Heart right ventricle (tissue), 16 donors: ENCODE measurements at regions of chr19 and their contacts with region 1.

Region 1: GRCh38 chr19:3403489-3404323 is 37.3 kb downstream of the NFIC start:
- DNase-seq: peak; percentile 90 to 95
- ATAC-seq: peak; percentile 68 to 87 (median 80)
- H3K4me3 ChIP-seq: peak overlapping the region; percentile 11 to 58 (median 46)
- H3K27ac ChIP-seq: peak overlapping the region; percentile 97 to 100 (median 100)
- H3K4me1 ChIP-seq: peaks cover 21 to 92% (median 57%) of the 10 kb centered on the region in 9 donors
- H3K27me3 ChIP-seq: no peaks in the 10 kb centered on the region
- CTCF ChIP-seq: no peak

Region 2: GRCh38 chr19:3336680-3337523 is 66.8 kb before region 1 on chr19:
- intact Hi-C with region 1: loop called in 2 of 10 experiments (anchors 2 to 5 kb)
- DNase-seq: peak; percentile 83 to 87
- ATAC-seq: peak; percentile 87 to 97 (median 94)
- H3K4me3 ChIP-seq: no peak overlapping the region
- H3K27ac ChIP-seq: peak overlapping the region; percentile 83 to 97 (median 92)
- H3K4me1 ChIP-seq: peaks cover 20 to 40% (median 34%) of the 10 kb centered on the region in 9 donors
- H3K27me3 ChIP-seq: no peaks in the 10 kb centered on the region
- CTCF ChIP-seq: no peak

Region 3: GRCh38 chr19:3360421-3361383 is 43.0 kb before region 1 on chr19:
- intact Hi-C with region 1: loop called in 7 of 10 experiments (anchors 2 to 5 kb)
- DNase-seq: peak; percentile 81 to 84
- ATAC-seq: peak; percentile 56 to 82 (median 72)
- H3K4me3 ChIP-seq: peak overlapping the region; percentile 40 to 100 (median 82)
- H3K27ac ChIP-seq: peak overlapping the region; percentile 88 to 100 (median 96)
- H3K4me1 ChIP-seq: peaks cover 17 to 60% (median 43%) of the 10 kb centered on the region in 9 donors
- H3K27me3 ChIP-seq: peaks cover 0 to 10% (median 0%) of the 10 kb centered on the region in 7 donors
- CTCF ChIP-seq: peak in 5 of 9 donors; percentile 22 to 55 (median 48)

Region 4: GRCh38 chr19:3365836-3366752 is 37.6 kb before region 1 on chr19 and contains the start of gene NFIC:
- intact Hi-C with region 1: loop called in 9 of 10 experiments (anchors 2 to 5 kb)
- DNase-seq: peak; percentile 83 to 84
- ATAC-seq: peak; percentile 66 to 77 (median 71)
- H3K4me3 ChIP-seq: peak within 1 kb of the TSS; percentile 78 to 95 (median 84)
- H3K27ac ChIP-seq: peak within 1 kb of the TSS; percentile 94 to 100 (median 98)
- H3K4me1 ChIP-seq: peaks cover 25 to 80% (median 66%) of the 10 kb centered on the region in 9 donors
- H3K27me3 ChIP-seq: no peaks in the 10 kb centered on the region
- CTCF ChIP-seq: no peak
- total RNA-seq, gene NFIC: 132 to 217 (median 161) TPM

Region 5: GRCh38 chr19:3429581-3430080 is 25.9 kb after region 1 on chr19:
- intact Hi-C with region 1: loop called in 4 of 10 experiments (anchors 1 to 2 kb)
- DNase-seq: peak; percentile 90
- ATAC-seq: peak; percentile 63 to 89 (median 82)
- H3K4me3 ChIP-seq: peak overlapping the region in 1 of 10 donors; percentile 23
- H3K27ac ChIP-seq: peak overlapping the region; percentile 66 to 93 (median 82)
- H3K4me1 ChIP-seq: peaks cover 10 to 67% (median 36%) of the 10 kb centered on the region in 9 donors
- H3K27me3 ChIP-seq: no peaks in the 10 kb centered on the region
- CTCF ChIP-seq: peak; percentile 99 to 100 (median 99)

Region 6: GRCh38 chr19:3606690-3607289 is 203.1 kb after region 1 on chr19 and contains the start of gene TBXA2R:
- intact Hi-C with region 1: no loop called
- DNase-seq: peak; percentile 77 to 84
- ATAC-seq: peak; percentile 36 to 70 (median 59)
- H3K4me3 ChIP-seq: peak within 1 kb of the TSS; percentile 37 to 67 (median 60)
- H3K27ac ChIP-seq: peak within 1 kb of the TSS; percentile 85 to 95 (median 91)
- H3K4me1 ChIP-seq: peaks cover 10 to 73% (median 51%) of the 10 kb centered on the region in 9 donors
- H3K27me3 ChIP-seq: peaks cover 0 to 28% (median 5%) of the 10 kb centered on the region in 7 donors
- CTCF ChIP-seq: no peak
- total RNA-seq, gene TBXA2R: 1.6 to 4.0 (median 3.0) TPM